Natural killer cell (primary cell): ENCODE measurements at regions of chr6 and their contacts with region 1.

Region 1: DNA sequence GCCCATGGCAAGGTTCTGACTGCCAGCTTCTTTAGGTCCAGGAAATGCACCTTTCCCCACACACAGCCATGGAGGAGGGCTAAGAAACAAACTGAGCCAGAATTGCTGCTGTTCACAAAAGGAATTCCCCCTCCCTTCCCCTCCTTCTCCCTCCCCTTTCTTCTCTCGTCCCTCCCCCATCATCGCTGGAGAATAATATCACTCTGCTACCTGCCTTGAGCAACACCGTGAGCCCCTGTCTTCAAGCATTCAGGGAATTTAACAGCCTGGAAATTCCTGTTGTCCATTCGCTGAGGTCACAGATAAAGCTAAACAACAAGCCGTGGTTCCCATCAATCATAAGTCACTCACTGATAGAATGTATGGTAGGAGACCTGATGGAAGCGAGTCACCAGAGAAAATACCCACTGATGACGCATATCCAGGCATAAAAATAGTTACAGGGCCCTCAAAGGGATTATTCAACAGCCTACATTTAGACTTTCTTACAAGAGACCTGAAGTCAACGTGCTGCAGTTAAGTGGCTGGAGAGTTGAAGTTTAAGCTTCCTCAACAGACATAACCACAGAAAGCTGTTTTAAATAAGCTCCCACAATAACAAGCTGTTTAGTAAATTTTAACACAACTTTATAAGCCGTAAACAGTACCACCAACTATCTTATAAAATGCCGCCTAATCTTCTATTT is 59.7 kb downstream of the HIVEP2 start:
- DNase-seq: peak; percentile 30 to 91
- ATAC-seq: peak; percentile 83 to 89 (median 84)
- H3K4me3 ChIP-seq: peak overlapping the region; percentile 5
- H3K4me3 Mint-ChIP-seq: peak overlapping the region; percentile 65
- H3K27ac ChIP-seq: peak overlapping the region; percentile 64
- H3K27ac Mint-ChIP-seq: peak overlapping the region; percentile 84 to 92
- H3K4me1 ChIP-seq: peaks cover 7% of the 10 kb centered on the region
- H3K4me1 Mint-ChIP-seq: peaks cover 37 to 48% of the 10 kb centered on the region in 2 donors
- H3K27me3 ChIP-seq: no peaks in the 10 kb centered on the region
- H3K27me3 Mint-ChIP-seq: no peaks in the 10 kb centered on the region
- CTCF ChIP-seq: no peak

Region 2: GRCh38 chr6:142746524-142746923 is 138.8 kb before region 1 on chr6:
- intact Hi-C with region 1: loop called (anchors 2 kb)
- DNase-seq: peak in 1 of 2 donors; percentile 71
- ATAC-seq: peak; percentile 63 to 70 (median 64)
- H3K4me3 ChIP-seq: no peak overlapping the region
- H3K4me3 Mint-ChIP-seq: no peak overlapping the region
- H3K27ac ChIP-seq: no peak overlapping the region
- H3K27ac Mint-ChIP-seq: no peak overlapping the region
- H3K4me1 ChIP-seq: no peaks in the 10 kb centered on the region
- H3K4me1 Mint-ChIP-seq: no peaks in the 10 kb centered on the region
- H3K27me3 ChIP-seq: no peaks in the 10 kb centered on the region
- H3K27me3 Mint-ChIP-seq: peaks cover 6 to 13% of the 10 kb centered on the region in 2 donors
- CTCF ChIP-seq: peak; percentile 51

Region 3: DNA sequence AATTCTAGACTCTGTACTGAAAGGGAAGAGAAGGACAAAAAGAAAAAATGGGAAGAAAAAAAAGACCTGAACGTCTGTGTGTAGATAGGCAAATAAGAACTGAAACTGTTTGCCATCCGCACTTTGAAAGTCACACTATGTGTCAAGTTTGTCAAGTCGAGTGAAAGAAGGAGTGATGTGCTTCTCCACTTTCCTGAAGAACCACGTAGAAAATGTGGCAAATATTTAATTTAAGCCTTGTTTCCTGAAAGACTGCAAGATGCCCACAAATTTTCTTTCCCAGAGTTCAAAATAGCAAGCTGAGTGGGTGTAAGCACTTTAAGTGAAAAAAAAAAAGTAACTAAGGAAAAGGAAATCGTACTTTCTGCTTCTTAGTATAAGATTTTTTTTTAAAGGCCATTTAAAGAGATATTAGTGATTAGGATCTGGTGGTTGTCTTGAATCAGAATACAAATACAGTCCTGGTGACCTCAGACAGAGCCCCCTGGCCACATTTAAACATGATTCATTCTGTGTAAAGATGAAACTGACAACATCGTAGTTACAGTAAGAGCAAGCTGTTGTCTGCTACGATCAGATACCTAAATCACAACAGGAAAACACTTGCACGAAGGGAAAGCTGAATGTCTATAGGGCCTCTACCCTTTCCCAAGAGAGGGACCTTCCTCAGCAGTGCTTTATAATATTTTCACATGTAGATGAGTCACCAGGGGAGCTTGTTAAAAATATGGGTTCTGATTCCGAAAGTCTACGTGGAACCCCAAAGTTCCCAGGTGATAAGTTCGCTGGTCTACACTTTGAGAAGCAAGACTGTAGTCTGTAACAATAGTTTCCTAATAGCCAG is 42.7 kb before region 1 on chr6:
- intact Hi-C with region 1: loop called (anchors 5 kb)
- DNase-seq: peak in 1 of 2 donors; percentile 84
- ATAC-seq: peak; percentile 60 to 79 (median 69)
- H3K4me3 ChIP-seq: peak overlapping the region; percentile 17
- H3K4me3 Mint-ChIP-seq: peak overlapping the region; percentile 84
- H3K27ac ChIP-seq: peak overlapping the region; percentile 63
- H3K27ac Mint-ChIP-seq: peak overlapping the region; percentile 93
- H3K4me1 ChIP-seq: peaks cover 21% of the 10 kb centered on the region
- H3K4me1 Mint-ChIP-seq: peaks cover 44 to 50% of the 10 kb centered on the region in 2 donors
- H3K27me3 ChIP-seq: no peaks in the 10 kb centered on the region
- H3K27me3 Mint-ChIP-seq: no peaks in the 10 kb centered on the region
- CTCF ChIP-seq: no peak

Region 4: GRCh38 chr6:142902636-142903053 is 17.3 kb after region 1 on chr6:
- intact Hi-C with region 1: loop called (anchors 1 kb)
- DNase-seq: peak; percentile 80 to 93
- ATAC-seq: peak; percentile 89 to 98 (median 90)
- H3K4me3 ChIP-seq: no peak overlapping the region
- H3K4me3 Mint-ChIP-seq: peak overlapping the region; percentile 86
- H3K27ac ChIP-seq: peak overlapping the region; percentile 87
- H3K27ac Mint-ChIP-seq: peak overlapping the region; percentile 93 to 98
- H3K4me1 ChIP-seq: peaks cover 14% of the 10 kb centered on the region
- H3K4me1 Mint-ChIP-seq: peaks cover 40 to 43% of the 10 kb centered on the region in 2 donors
- H3K27me3 ChIP-seq: no peaks in the 10 kb centered on the region
- H3K27me3 Mint-ChIP-seq: no peaks in the 10 kb centered on the region
- CTCF ChIP-seq: no peak

Region 5: DNA sequence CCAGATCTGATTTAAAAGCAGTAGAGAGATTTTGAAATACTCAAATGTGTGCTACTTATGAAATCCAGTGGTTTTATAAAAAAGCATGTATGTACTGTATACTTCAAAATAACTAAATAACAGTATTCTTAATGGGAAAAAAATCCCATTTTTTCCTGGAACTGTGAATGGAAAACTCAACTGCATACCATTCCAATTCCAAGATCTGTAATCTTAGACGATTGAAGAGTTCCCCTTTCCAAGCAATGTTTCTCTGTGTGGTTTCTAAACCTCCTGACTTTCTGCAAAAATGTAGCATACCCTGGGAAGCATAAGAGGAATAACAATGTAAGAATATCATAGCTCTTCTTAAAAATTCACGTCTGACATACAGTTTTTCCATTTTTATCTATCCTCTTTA is 100.0 kb after region 1 on chr6:
- intact Hi-C with region 1: no loop called
- DNase-seq: no peak
- ATAC-seq: no peak
- H3K4me3 ChIP-seq: no peak overlapping the region
- H3K4me3 Mint-ChIP-seq: no peak overlapping the region
- H3K27ac ChIP-seq: no peak overlapping the region
- H3K27ac Mint-ChIP-seq: no peak overlapping the region
- H3K4me1 ChIP-seq: no peaks in the 10 kb centered on the region
- H3K4me1 Mint-ChIP-seq: no peaks in the 10 kb centered on the region
- H3K27me3 ChIP-seq: no peaks in the 10 kb centered on the region
- H3K27me3 Mint-ChIP-seq: peaks cover 8 to 32% of the 10 kb centered on the region in 2 donors
- CTCF ChIP-seq: no peak